ENCODE measurements at regions of chr19 and their contacts with region 1.

Region 1: GRCh38 chr19:10835754-10836477 is at the start of gene TMED1:
- DNase-seq: peak; percentile 81 to 97 (median 93)
- ATAC-seq: peak; percentile 92
- H3K4me3 ChIP-seq: peak within 1 kb of the TSS; percentile 98
- H3K4me3 Mint-ChIP-seq: peak within 1 kb of the TSS; percentile 82 to 99 (median 96)
- H3K27ac ChIP-seq: peak within 1 kb of the TSS; percentile 93
- H3K27ac Mint-ChIP-seq: peak within 1 kb of the TSS; percentile 98 to 100 (median 99)
- H3K4me1 ChIP-seq: peaks cover 8 to 13% of the 10 kb centered on the region in 2 donors
- H3K4me1 Mint-ChIP-seq: peaks cover 12 to 20% (median 15%) of the 10 kb centered on the region in 7 donors
- H3K27me3 ChIP-seq: no peaks in the 10 kb centered on the region
- H3K27me3 Mint-ChIP-seq: no peaks in the 10 kb centered on the region
- total RNA-seq, gene TMED1: 7.6 to 12.8 (median 9.9) TPM

Region 2: GRCh38 chr19:10928525-10929401 is 92.8 kb after region 1 on chr19 and contains the starts of genes TIMM29 and YIPF2:
- CTCF ChIA-PET with region 1: no interaction called
- POLR2A ChIA-PET with region 1: no interaction called
- intact Hi-C with region 1: loop called in 1 of 2 experiments (anchors 1 kb)
- DNase-seq: peak; percentile 76 to 92 (median 88)
- ATAC-seq: peak; percentile 91
- H3K4me3 ChIP-seq: peak within 1 kb of the TSS; percentile 89
- H3K4me3 Mint-ChIP-seq: peak within 1 kb of the TSS; percentile 84 to 96 (median 92)
- H3K27ac ChIP-seq: peak within 1 kb of the TSS; percentile 77
- H3K27ac Mint-ChIP-seq: peak within 1 kb of the TSS; percentile 66 to 93 (median 90)
- H3K4me1 ChIP-seq: peaks cover 14 to 16% of the 10 kb centered on the region in 2 donors
- H3K4me1 Mint-ChIP-seq: peaks cover 12 to 33% (median 26%) of the 10 kb centered on the region in 7 donors
- H3K27me3 ChIP-seq: no peaks in the 10 kb centered on the region
- H3K27me3 Mint-ChIP-seq: no peaks in the 10 kb centered on the region
- total RNA-seq, gene TIMM29: 15.8 to 33.4 (median 24.7) TPM
- total RNA-seq, gene YIPF2: 20.5 to 27.9 (median 26.2) TPM

Measured in naive thymus-derived CD4-positive, alpha-beta T cell (primary cell).